ENCODE measurements at regions of chr5 and their contacts with region 1.

Region 1: DNA sequence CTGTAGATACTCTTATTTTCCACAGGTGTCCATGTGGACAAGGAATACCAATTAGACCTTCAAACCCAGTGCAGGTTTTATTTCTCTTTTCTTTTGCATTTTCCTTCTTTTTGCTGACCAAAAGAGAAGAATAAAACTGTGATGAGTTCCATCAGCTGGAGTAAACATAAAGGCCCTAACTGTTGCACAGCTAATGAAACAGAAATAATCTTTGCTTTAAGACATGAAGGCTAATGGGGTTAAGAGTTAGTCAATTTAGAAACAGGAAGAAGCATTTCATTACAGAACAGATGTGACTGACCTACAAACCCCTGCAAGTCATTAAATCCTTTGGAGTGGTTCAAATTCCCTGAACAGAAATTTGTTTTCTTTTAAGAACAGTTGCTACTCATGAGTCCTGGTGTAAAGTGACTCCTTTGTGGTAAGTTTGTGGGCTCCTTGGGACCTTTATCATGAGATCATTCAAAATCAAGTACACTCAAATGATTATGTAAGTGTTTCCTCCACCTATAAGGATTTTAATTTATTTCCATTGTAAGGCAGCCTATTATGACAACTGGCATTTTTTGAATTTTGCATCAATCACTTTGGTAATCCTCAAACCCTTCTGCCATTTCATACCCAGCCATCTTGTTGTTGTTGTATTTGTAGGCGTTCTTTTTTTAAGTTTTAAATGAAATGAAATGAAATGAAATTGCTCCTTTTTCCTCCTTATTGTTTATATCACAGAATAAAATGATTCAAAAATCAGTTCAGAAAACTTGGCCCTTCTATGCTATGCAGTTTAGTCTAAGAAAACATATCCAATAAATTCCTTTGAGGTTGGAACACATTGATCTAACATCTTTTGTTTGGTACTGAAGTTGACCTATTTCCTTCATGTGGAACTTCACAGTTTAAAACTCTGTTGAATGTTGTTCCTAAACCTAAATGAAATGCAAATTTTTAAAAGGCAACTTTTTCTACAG is 1.3 kb downstream of the MINAR2 start:
- DNase-seq: no peak
- H3K4me3 ChIP-seq: no peak overlapping the region
- H3K27ac ChIP-seq: no peak overlapping the region
- H3K4me1 ChIP-seq: no peaks in the 10 kb centered on the region
- H3K27me3 ChIP-seq: no peaks in the 10 kb centered on the region
- CTCF ChIP-seq: no peak
- EP300 ChIP-seq: no peak
- POLR2A ChIP-seq: no peak

Region 2: DNA sequence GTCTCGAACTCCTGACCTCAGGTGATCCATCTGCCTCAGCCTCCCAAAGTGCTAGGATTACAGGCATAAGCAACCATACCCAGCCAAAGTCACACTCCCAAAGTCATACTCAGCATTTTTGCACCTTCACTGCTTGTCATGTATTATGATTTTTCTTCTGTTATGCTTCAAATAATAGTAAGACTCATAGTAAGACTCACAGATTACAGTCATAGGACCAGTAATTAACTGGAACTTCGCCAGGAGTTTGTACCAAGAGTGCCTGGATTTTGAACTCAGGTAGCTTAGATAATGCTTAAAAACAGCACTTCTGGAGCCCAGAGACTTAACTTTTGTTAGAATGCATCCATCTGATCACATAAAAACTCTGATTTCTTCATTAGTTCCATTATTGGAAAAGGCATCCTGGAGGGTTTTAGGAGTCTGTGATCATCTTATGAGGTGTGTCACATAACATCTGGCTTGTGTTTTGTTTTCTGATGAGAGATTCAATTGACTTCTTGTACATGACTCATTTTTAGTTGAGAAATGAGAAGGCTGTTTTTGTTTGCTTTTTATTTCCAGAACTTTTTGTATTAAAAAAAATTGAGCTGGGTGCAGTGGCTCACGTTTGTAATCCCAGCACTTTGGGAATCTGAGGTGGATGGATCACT is 157.6 kb before region 1 on chr5:
- intact Hi-C with region 1: no loop called
- DNase-seq: no peak
- H3K4me3 ChIP-seq: no peak overlapping the region
- H3K27ac ChIP-seq: no peak overlapping the region
- H3K4me1 ChIP-seq: no peaks in the 10 kb centered on the region
- H3K27me3 ChIP-seq: no peaks in the 10 kb centered on the region
- CTCF ChIP-seq: no peak
- EP300 ChIP-seq: no peak
- POLR2A ChIP-seq: no peak

Region 3: GRCh38 chr5:129716235-129716634 is 33.0 kb before region 1 on chr5:
- intact Hi-C with region 1: loop called in 1 of 4 experiments (anchors 1 kb)
- DNase-seq: no peak
- H3K4me3 ChIP-seq: no peak overlapping the region
- H3K27ac ChIP-seq: no peak overlapping the region
- H3K4me1 ChIP-seq: no peaks in the 10 kb centered on the region
- H3K27me3 ChIP-seq: no peaks in the 10 kb centered on the region
- CTCF ChIP-seq: no peak
- EP300 ChIP-seq: no peak
- POLR2A ChIP-seq: no peak

Region 4: DNA sequence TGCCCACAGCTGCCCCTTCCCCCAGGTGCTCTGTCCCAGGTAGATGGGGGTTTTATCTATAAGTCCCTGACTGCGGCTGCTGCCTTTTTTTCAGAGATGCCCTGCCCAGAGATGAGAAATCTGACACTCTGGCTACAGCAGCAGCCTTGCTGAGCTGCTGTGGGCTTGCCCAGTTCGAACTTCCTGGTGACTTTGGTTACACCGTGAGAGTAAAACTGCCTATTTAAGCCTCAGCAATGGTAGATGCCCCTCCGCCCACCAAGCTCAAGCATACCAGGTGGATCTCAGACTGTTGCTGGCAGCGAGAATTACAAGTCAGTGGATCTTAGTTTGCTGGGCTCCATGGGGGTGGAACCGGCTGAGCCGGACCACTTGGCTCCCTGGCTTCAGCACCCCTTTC is 55.5 kb after region 1 on chr5:
- intact Hi-C with region 1: no loop called
- DNase-seq: no peak
- H3K4me3 ChIP-seq: no peak overlapping the region
- H3K27ac ChIP-seq: no peak overlapping the region
- H3K4me1 ChIP-seq: no peaks in the 10 kb centered on the region
- H3K27me3 ChIP-seq: no peaks in the 10 kb centered on the region
- CTCF ChIP-seq: no peak
- EP300 ChIP-seq: no peak
- POLR2A ChIP-seq: no peak

Region 5: GRCh38 chr5:130090569-130091270 is 341.5 kb after region 1 on chr5:
- intact Hi-C with region 1: no loop called
- DNase-seq: no peak
- H3K4me3 ChIP-seq: no peak overlapping the region
- H3K27ac ChIP-seq: no peak overlapping the region
- H3K4me1 ChIP-seq: no peaks in the 10 kb centered on the region
- H3K27me3 ChIP-seq: no peaks in the 10 kb centered on the region
- CTCF ChIP-seq: no peak
- EP300 ChIP-seq: no peak
- POLR2A ChIP-seq: no peak

Region 6: DNA sequence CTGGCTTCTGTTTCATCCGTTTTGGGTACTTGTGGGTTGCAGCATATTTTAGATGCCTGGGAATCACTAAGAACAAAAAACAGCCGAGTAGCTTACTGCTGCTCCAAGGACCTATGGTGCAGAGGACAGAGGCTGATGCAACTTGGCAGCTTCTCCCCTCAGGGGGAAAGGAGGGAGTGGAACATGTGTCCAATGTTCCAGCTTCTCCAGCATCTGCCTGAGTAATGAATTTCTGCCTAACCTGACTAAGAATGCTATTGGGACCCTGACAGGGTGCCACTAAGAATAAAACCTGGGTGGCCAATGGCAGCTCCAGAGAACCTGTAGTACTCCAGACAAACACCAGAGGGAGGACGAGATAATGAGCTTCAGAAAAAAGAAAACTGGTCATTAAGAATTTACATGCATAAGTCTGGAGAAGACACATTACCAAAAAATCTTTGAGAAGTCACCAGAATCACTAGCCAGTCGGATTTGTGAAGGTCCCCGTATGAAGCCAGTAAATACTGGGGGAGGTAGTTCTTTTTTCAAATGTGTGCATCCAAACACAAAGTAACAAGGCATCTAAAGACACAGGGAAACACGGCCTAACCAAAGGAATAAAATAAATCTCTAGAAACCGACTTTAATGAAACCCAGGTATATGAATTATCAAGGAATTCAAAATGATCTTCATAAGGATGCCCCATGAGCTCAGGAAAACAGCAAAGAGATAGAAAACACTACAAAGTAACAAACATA is 1122.3 kb after region 1 on chr5:
- intact Hi-C with region 1: no loop called
- DNase-seq: no peak
- H3K4me3 ChIP-seq: no peak overlapping the region
- H3K27ac ChIP-seq: no peak overlapping the region
- H3K4me1 ChIP-seq: no peaks in the 10 kb centered on the region
- H3K27me3 ChIP-seq: no peaks in the 10 kb centered on the region
- CTCF ChIP-seq: no peak
- EP300 ChIP-seq: no peak
- POLR2A ChIP-seq: no peak